IMR-90 (cell line): ENCODE measurements at regions of chr3 and their contacts with region 1.

Region 1: GRCh38 chr3:155079746-155080487 is at the start of gene MME:
- DNase-seq: peak; percentile 73
- ATAC-seq: peak; percentile 95
- H3K4me3 ChIP-seq: peak within 1 kb of the TSS; percentile 65
- H3K27ac ChIP-seq: peak within 1 kb of the TSS; percentile 30
- H3K4me1 ChIP-seq: 0 out of 2 replicates have a peak, but pooled peaks cover 2% of the 10 kb centered on the region
- H3K27me3 ChIP-seq: peaks cover 5% of the 10 kb centered on the region
- CTCF ChIP-seq: no peak
- POLR2A ChIP-seq: peak; percentile 28; the same call in 1 of the 2 replicates
- RAD21 ChIP-seq: no peak; the same call in 1 of the 2 replicates
- total RNA-seq, gene MME: 19.4 and 22.8 TPM in 2 replicates

Region 2: DNA sequence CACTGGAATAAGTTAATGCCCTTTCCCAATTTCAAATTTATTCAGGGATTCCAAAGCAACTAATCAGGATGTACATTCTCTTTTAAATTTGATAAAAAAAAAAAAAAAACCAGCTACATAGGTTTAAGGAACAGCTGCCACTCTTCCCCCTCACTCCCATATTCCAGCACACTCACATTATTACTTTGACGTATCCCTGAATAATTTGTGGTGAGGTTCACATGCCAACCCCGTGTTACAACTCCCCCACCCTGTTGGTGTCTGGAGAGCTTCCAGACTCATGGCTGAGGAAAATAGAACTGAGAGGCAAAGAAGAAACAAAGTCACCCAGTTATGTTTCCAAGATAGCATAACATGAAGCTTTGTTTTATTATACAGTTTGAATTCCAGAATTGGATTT is 300.3 kb before region 1 on chr3:
- CTCF ChIA-PET with region 1: no interaction called
- POLR2A ChIA-PET with region 1: no interaction called
- dilution Hi-C with region 1: no loop called
- in situ Hi-C with region 1: no loop called
- intact Hi-C with region 1: loop called (anchors 5 kb)
- DNase-seq: peak; percentile 87
- ATAC-seq: no peak
- H3K4me3 ChIP-seq: no peak overlapping the region
- H3K27ac ChIP-seq: no peak overlapping the region; the same call in 1 of the 2 replicates
- H3K4me1 ChIP-seq: peaks cover 10% of the 10 kb centered on the region
- H3K27me3 ChIP-seq: no peaks in the 10 kb centered on the region; the same call in 1 of the 2 replicates
- CTCF ChIP-seq: no peak
- POLR2A ChIP-seq: no peak
- RAD21 ChIP-seq: no peak

Region 3: DNA sequence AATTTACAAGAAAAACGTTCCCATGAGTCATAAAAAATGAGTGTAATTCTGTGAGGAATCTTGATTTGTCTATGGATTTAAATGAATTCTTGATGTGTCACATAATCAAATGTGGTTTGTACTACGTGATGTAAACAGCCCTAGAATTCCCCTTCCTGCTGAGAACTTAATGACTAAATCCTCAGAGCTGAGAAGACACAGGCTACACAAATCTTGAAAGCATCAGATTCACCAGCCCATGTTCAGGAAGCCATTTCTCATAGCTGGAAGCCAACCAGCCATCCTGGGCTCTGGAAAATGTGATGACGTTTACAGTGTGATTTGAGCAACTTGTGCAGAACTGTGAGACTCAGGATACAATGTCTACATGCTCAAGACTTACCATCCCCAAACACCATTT is 193.5 kb before region 1 on chr3:
- CTCF ChIA-PET with region 1: no interaction called
- POLR2A ChIA-PET with region 1: no interaction called
- dilution Hi-C with region 1: no loop called
- in situ Hi-C with region 1: loop called (anchors 10 kb)
- intact Hi-C with region 1: no loop called
- DNase-seq: peak; percentile 100
- ATAC-seq: peak; percentile 95
- H3K4me3 ChIP-seq: no peak overlapping the region
- H3K27ac ChIP-seq: peak overlapping the region; percentile 59
- H3K4me1 ChIP-seq: peaks cover 7% of the 10 kb centered on the region
- H3K27me3 ChIP-seq: no peaks in the 10 kb centered on the region
- CTCF ChIP-seq: no peak
- POLR2A ChIP-seq: peak; percentile 48; the same call in 1 of the 2 replicates
- RAD21 ChIP-seq: no peak

Region 4: GRCh38 chr3:154904328-154904727 is 175.6 kb before region 1 on chr3:
- CTCF ChIA-PET with region 1: no interaction called
- POLR2A ChIA-PET with region 1: no interaction called
- dilution Hi-C with region 1: no loop called
- in situ Hi-C with region 1: no loop called
- intact Hi-C with region 1: loop called (anchors 2 kb)
- DNase-seq: peak; percentile 54
- ATAC-seq: peak; percentile 70; the same call in 1 of the 2 replicates
- H3K4me3 ChIP-seq: no peak overlapping the region
- H3K27ac ChIP-seq: no peak overlapping the region
- H3K4me1 ChIP-seq: peaks cover 3% of the 10 kb centered on the region; the same call in 1 of the 2 replicates
- H3K27me3 ChIP-seq: no peaks in the 10 kb centered on the region
- CTCF ChIP-seq: peak; percentile 58
- POLR2A ChIP-seq: no peak
- RAD21 ChIP-seq: peak; percentile 46

Region 5: DNA sequence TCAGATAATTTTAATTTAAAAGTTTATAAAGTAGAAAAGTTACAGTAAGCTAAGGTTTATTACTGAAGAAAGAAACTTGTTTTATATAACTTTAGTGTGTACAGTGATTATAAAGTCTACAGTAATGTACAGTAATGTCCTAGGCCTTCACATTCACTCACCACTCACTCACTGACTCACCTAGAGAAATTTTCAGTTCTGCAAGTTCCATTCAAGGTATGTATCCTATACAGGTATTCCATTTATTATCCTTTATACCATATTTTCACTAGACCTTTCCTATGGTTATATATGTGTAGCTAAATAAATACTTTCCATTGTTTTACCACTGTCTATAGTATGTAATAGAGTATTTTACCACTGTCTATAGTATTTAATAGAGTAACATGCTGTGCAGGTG is 33.0 kb before region 1 on chr3:
- CTCF ChIA-PET with region 1: no interaction called
- POLR2A ChIA-PET with region 1: no interaction called
- dilution Hi-C with region 1: no loop called
- in situ Hi-C with region 1: no loop called
- intact Hi-C with region 1: loop called (anchors 1 kb)
- DNase-seq: no peak
- ATAC-seq: no peak
- H3K4me3 ChIP-seq: no peak overlapping the region
- H3K27ac ChIP-seq: no peak overlapping the region
- H3K4me1 ChIP-seq: no peaks in the 10 kb centered on the region
- H3K27me3 ChIP-seq: no peaks in the 10 kb centered on the region
- CTCF ChIP-seq: no peak
- POLR2A ChIP-seq: no peak
- RAD21 ChIP-seq: no peak

Region 6: GRCh38 chr3:155302481-155302880 is 222.6 kb after region 1 on chr3:
- CTCF ChIA-PET with region 1: no interaction called
- POLR2A ChIA-PET with region 1: no interaction called
- dilution Hi-C with region 1: no loop called
- in situ Hi-C with region 1: no loop called
- intact Hi-C with region 1: loop called (anchors 5 kb)
- DNase-seq: peak; percentile 84
- ATAC-seq: peak; percentile 90
- H3K4me3 ChIP-seq: no peak overlapping the region
- H3K27ac ChIP-seq: no peak overlapping the region
- H3K4me1 ChIP-seq: no peaks in the 10 kb centered on the region; the same call in 1 of the 2 replicates
- H3K27me3 ChIP-seq: no peaks in the 10 kb centered on the region
- CTCF ChIP-seq: no peak
- POLR2A ChIP-seq: no peak
- RAD21 ChIP-seq: no peak

Region 7: GRCh38 chr3:155323063-155323666 is 243.2 kb after region 1 on chr3:
- CTCF ChIA-PET with region 1: interaction called, 3 read pairs
- POLR2A ChIA-PET with region 1: no interaction called
- dilution Hi-C with region 1: no loop called
- in situ Hi-C with region 1: no loop called
- intact Hi-C with region 1: loop called (anchors 5 kb)
- DNase-seq: peak; percentile 89
- ATAC-seq: peak; percentile 91
- H3K4me3 ChIP-seq: no peak overlapping the region
- H3K27ac ChIP-seq: no peak overlapping the region
- H3K4me1 ChIP-seq: no peaks in the 10 kb centered on the region
- H3K27me3 ChIP-seq: no peaks in the 10 kb centered on the region
- CTCF ChIP-seq: peak; percentile 88
- POLR2A ChIP-seq: no peak; the same call in 1 of the 2 replicates
- RAD21 ChIP-seq: peak; percentile 95